Activated CD4-positive, alpha-beta T cell treated with anti-CD3 and anti-CD28 coated beads, Interleukin-2, amount 10 ng/mL, durations not matched to agents 24 days and 14 days (primary cell): ENCODE measurements at regions of chr10 and their contacts with region 1.

Region 1: GRCh38 chr10:123132576-123133477 is 2.9 kb upstream of the HMX3 start:
- DNase-seq: peak; percentile 95
- H3K4me3 Mint-ChIP-seq: peak overlapping the region; percentile 73
- H3K27ac Mint-ChIP-seq: peak overlapping the region; percentile 40
- H3K4me1 Mint-ChIP-seq: peaks cover 10% of the 10 kb centered on the region
- H3K27me3 Mint-ChIP-seq: peaks cover 67% of the 10 kb centered on the region

Region 2: DNA sequence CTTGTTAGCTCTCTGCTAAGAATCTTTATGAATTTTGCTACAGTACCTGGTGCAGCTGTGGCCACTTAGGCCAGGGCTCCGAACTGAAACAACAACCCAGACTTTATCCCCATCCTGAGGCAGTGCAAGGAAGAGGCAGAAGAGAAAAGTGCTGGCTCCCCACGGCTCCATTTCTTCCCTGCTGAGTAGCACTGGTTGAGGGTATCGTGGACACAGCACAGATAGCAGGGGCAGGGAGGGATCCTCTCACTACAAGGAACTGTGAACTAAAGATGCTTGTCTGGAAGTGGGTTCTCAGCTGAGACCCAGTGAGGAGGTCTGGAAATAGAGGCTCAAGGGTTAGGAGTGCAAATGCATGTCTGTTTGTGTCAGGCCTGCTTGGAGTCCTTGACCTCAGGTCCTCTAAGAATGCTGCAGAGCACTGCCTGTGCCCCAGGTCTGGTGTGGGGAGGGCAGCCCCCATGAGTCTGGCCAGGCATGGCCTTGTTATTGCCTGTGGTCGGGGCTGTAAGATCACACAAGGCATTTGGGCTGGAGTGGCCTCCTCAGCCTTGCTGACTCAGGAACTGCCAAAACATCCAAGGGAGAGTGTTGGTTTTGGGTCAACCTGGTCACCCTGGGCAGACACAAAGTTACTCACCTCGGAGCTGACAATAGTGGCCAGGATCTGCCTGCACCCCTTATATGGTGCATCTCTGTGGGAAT is 514.2 kb before region 1 on chr10:
- intact Hi-C with region 1: no loop called
- DNase-seq: no peak
- H3K4me3 Mint-ChIP-seq: no peak overlapping the region
- H3K27ac Mint-ChIP-seq: no peak overlapping the region
- H3K4me1 Mint-ChIP-seq: no peaks in the 10 kb centered on the region
- H3K27me3 Mint-ChIP-seq: no peaks in the 10 kb centered on the region

Region 3: DNA sequence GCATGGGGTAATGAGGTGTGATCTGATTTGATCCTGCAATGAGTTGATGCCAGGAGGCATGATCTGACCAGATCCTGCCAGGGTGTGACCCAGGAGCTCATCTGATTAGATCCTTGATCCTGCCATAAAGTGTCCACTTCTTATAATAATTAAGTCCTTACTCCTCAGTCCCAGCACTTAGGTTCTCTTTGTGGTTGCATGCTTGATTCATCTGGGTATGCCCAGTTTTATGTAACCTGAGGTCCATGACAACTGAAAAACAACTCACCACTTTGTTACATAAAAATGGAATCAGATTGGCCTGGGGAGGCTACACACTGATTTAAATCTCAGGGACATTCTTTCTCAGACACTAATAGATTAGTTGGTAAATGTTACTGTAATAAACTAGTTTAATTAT is 105.0 kb before region 1 on chr10:
- intact Hi-C with region 1: no loop called
- DNase-seq: no peak
- H3K4me3 Mint-ChIP-seq: no peak overlapping the region
- H3K27ac Mint-ChIP-seq: no peak overlapping the region
- H3K4me1 Mint-ChIP-seq: peaks cover 3% of the 10 kb centered on the region
- H3K27me3 Mint-ChIP-seq: no peaks in the 10 kb centered on the region

Region 4: DNA sequence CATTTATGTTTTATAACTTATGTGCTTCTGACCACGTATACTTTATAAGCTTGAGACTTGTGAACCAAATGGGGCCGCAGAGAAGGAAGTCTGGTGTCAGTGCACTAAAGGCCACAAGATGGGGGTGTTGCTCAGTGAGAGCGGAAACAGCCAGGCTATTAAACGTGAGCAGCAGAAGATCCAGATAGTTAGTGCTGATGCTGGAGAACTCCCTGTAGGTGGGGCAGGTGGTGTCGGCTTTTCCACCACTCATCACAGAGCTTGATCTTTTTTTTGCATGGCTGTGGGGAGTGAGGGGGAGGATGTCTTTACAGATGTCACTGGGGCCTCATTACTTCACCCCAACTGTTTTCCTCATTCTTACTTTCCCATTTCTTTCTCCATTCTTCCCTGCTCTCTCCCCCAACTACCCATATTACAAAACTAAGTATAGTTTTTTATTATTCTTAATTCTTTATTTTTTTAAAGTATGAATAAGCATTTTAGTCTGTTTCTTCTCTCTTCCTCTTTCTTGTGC is 89.4 kb before region 1 on chr10:
- intact Hi-C with region 1: loop called (anchors 2 kb)
- DNase-seq: peak; percentile 83
- H3K4me3 Mint-ChIP-seq: no peak overlapping the region
- H3K27ac Mint-ChIP-seq: no peak overlapping the region
- H3K4me1 Mint-ChIP-seq: peaks cover 7% of the 10 kb centered on the region
- H3K27me3 Mint-ChIP-seq: no peaks in the 10 kb centered on the region

Region 5: GRCh38 chr10:123147635-123148413 is 15.0 kb after region 1 on chr10 and contains the start of gene HMX2:
- intact Hi-C with region 1: loop called (anchors 1 kb)
- DNase-seq: peak; percentile 77
- H3K4me3 Mint-ChIP-seq: peak within 1 kb of the TSS; percentile 53
- H3K27ac Mint-ChIP-seq: peak within 1 kb of the TSS; percentile 73
- H3K4me1 Mint-ChIP-seq: peaks cover 29% of the 10 kb centered on the region
- H3K27me3 Mint-ChIP-seq: peaks cover 67% of the 10 kb centered on the region
- total RNA-seq, gene HMX2: not detected in 2 replicates

Region 6: DNA sequence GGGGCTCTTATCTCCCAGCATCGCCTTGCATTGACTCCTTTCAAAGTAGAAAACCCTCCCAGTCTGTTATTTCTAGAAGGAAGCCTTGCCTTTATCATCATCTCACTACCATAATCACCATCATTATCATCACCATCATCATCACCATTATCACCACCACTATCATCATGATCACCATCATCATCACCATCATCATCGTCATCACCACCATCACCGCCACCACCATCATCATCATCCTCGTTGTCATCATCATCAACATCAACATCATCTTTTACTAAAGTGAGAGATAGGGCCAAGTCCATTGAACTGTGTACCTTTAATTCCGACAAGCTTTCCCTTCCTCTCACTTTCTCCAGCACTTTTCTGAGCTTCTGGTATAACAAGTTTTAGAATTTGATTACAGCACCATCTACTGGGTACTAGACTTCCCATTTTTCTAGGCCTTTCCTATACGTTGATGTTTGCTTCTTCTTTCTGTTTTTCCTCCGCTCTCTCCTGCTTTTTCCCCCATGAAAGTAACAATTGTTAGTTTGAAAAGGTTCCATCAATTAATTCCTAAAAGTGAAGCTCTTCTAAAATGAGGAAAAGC is 247.8 kb after region 1 on chr10:
- intact Hi-C with region 1: loop called (anchors 1 kb)
- DNase-seq: no peak
- H3K4me3 Mint-ChIP-seq: no peak overlapping the region
- H3K27ac Mint-ChIP-seq: no peak overlapping the region
- H3K4me1 Mint-ChIP-seq: no peaks in the 10 kb centered on the region
- H3K27me3 Mint-ChIP-seq: no peaks in the 10 kb centered on the region

Region 7: DNA sequence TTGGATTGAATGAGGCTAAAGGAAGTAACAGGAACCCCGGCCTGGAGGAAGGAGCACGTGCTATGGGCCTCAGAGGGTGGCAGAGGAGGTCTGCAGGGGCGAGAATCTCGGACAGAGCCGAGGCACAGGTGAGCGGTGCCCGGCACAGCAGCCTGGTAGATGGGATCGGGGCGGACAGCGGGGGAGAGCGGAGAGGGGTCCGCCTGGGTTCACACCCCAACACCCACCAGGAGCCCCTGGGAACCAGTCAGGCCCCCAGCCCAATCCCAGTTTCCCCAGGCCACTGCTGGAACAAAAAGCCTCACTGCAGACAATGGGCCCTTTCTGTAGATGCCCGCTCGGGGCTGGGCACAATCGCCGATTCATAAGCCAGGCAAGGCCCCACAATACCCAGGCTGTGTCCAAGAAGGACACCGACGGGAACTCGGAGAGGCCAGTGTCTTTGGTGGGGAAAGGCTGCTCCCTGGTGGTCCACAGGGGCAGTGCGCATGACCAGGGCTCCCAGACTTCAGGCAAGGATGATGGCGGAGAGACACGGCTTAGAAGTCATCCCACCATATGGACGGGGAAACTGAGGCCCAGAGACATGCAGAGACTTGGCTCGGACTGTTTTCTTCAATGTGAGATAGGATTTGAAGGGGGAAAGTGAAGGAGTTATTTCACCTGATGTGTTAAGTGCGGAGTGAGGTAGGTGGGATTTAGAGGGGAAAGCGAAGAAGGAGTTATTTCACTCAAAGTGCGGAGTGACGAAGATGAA is 426.4 kb after region 1 on chr10:
- intact Hi-C with region 1: loop called (anchors 1 kb)
- DNase-seq: peak; percentile 89
- H3K4me3 Mint-ChIP-seq: no peak overlapping the region
- H3K27ac Mint-ChIP-seq: no peak overlapping the region
- H3K4me1 Mint-ChIP-seq: no peaks in the 10 kb centered on the region
- H3K27me3 Mint-ChIP-seq: peaks cover 3% of the 10 kb centered on the region